Naive thymus-derived CD4-positive, alpha-beta T cell (primary cell): ENCODE measurements at regions of chr5 and their contacts with region 1.

Region 1: DNA sequence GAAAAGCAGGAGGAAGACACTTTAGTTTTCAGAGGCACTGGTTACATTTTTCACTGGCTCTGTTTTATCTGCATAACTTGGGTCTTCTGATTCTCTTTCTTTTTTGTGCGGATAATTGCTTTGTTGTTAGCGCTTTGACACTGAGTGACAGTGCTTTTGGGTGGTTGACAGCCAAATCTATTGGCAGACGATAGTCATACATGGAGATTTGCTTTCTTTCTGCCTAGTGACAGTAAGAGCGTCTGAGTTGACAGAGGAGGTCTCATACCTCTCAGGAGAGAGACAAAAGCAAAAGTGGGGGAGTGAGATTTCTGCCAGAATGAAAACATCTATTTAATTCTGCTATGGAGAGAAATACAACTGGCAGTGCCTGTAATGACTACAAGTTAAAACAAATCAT is 2278.0 kb upstream of the WWC1 start:
- DNase-seq: no peak
- ATAC-seq: no peak
- H3K4me3 ChIP-seq: no peak overlapping the region
- H3K4me3 Mint-ChIP-seq: no peak overlapping the region
- H3K27ac ChIP-seq: no peak overlapping the region
- H3K27ac Mint-ChIP-seq: no peak overlapping the region
- H3K4me1 ChIP-seq: no peaks in the 10 kb centered on the region
- H3K4me1 Mint-ChIP-seq: peaks cover 0 to 1% (median 0%) of the 10 kb centered on the region in 7 donors
- H3K27me3 ChIP-seq: no peaks in the 10 kb centered on the region
- H3K27me3 Mint-ChIP-seq: no peaks in the 10 kb centered on the region

Region 2: GRCh38 chr5:164637931-164638521 is 1375.4 kb before region 1 on chr5:
- CTCF ChIA-PET with region 1: no interaction called
- POLR2A ChIA-PET with region 1: no interaction called
- intact Hi-C with region 1: no loop called
- DNase-seq: no peak
- ATAC-seq: no peak
- H3K4me3 ChIP-seq: no peak overlapping the region
- H3K4me3 Mint-ChIP-seq: no peak overlapping the region
- H3K27ac ChIP-seq: no peak overlapping the region
- H3K27ac Mint-ChIP-seq: no peak overlapping the region
- H3K4me1 ChIP-seq: no peaks in the 10 kb centered on the region
- H3K4me1 Mint-ChIP-seq: no peaks in the 10 kb centered on the region
- H3K27me3 ChIP-seq: no peaks in the 10 kb centered on the region
- H3K27me3 Mint-ChIP-seq: no peaks in the 10 kb centered on the region

Region 3: DNA sequence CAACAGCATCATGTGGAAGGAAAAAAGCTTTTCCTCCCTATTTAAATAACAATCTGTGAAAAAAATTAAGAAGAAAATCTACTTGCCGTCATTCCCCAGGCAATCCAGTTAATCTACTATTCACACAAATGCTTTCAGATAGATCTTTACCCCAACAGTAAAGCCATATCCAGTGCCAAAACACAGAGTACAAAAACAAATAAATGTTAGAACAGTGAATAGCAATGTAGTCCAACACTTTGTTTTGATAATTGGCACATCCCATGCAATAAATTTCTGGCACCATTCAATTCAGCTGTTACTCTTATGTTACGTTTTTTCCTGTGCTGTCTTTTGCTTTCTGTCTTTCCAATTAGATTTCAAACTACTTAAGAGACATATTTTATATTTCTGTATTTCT is 32.5 kb after region 1 on chr5:
- CTCF ChIA-PET with region 1: no interaction called
- POLR2A ChIA-PET with region 1: no interaction called
- intact Hi-C with region 1: no loop called
- DNase-seq: no peak
- ATAC-seq: no peak
- H3K4me3 ChIP-seq: no peak overlapping the region
- H3K4me3 Mint-ChIP-seq: no peak overlapping the region
- H3K27ac ChIP-seq: no peak overlapping the region
- H3K27ac Mint-ChIP-seq: no peak overlapping the region
- H3K4me1 ChIP-seq: no peaks in the 10 kb centered on the region
- H3K4me1 Mint-ChIP-seq: no peaks in the 10 kb centered on the region
- H3K27me3 ChIP-seq: no peaks in the 10 kb centered on the region
- H3K27me3 Mint-ChIP-seq: no peaks in the 10 kb centered on the region

Region 4: DNA sequence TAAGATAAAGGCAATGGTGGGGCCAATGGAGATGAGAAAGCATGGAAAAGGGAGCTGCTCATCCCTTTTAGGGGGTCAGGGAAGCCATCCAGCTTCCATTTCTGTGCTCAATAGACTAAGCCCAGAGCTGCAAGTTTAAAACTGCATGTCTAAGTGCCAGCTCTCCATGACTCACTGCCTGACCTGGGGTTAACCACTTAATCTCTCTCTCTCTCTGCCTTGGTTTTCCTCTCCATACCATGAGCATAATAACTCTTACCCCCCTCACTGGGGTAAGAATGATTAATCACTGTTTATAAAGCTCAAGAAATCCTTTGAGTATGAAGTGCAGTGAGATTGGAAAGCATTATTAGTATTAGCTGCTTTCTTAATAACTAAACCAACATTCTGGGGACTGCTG is 895.6 kb after region 1 on chr5:
- CTCF ChIA-PET with region 1: no interaction called
- POLR2A ChIA-PET with region 1: no interaction called
- intact Hi-C with region 1: loop called in 1 of 2 experiments (anchors 10 kb)
- DNase-seq: no peak
- ATAC-seq: no peak
- H3K4me3 ChIP-seq: no peak overlapping the region
- H3K4me3 Mint-ChIP-seq: no peak overlapping the region
- H3K27ac ChIP-seq: no peak overlapping the region
- H3K27ac Mint-ChIP-seq: no peak overlapping the region
- H3K4me1 ChIP-seq: no peaks in the 10 kb centered on the region
- H3K4me1 Mint-ChIP-seq: no peaks in the 10 kb centered on the region
- H3K27me3 ChIP-seq: no peaks in the 10 kb centered on the region
- H3K27me3 Mint-ChIP-seq: no peaks in the 10 kb centered on the region